ENCODE measurements at regions of chr14 and their contacts with region 1.

Region 1: GRCh38 chr14:37594238-37594914 is 673 bp downstream of the FOXA1 start:
- DNase-seq: no peak
- ATAC-seq: peak in 1 of 4 donors; percentile 6
- H3K4me3 ChIP-seq: peak overlapping the region; percentile 62
- H3K27ac ChIP-seq: no peak overlapping the region
- H3K4me1 ChIP-seq: peaks cover 29% of the 10 kb centered on the region
- H3K27me3 ChIP-seq: peaks cover 5 to 98% (median 56%) of the 10 kb centered on the region in 3 donors
- CTCF ChIP-seq: peak; percentile 49

Region 2: DNA sequence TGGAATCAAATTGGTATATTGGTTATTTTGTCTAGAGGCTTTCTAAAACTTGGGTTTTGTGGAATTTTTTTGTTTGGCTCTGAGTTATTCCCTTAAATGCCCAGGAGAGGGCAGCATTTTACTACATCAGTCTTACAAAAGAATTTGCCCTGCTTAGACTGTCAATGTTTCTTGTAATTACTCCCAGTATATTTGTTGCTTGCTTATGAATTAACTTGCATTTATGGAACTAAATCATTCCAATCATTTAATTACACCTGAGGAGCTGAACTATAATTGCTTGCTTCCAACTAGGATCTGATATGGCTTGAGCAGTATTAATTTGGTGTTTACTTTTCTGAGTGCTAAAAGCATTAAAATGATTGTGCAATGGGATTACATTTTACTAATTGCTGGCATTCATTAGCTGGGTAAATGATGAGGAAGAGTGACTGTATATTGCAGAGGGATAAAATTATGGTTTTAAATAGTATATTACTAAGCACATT is 347.9 kb before region 1 on chr14:
- intact Hi-C with region 1: loop called in 1 of 2 experiments (anchors 10 kb)
- DNase-seq: no peak
- ATAC-seq: peak in 1 of 4 donors; percentile 60
- H3K4me3 ChIP-seq: no peak overlapping the region
- H3K27ac ChIP-seq: no peak overlapping the region
- H3K4me1 ChIP-seq: no peaks in the 10 kb centered on the region
- H3K27me3 ChIP-seq: no peaks in the 10 kb centered on the region
- CTCF ChIP-seq: peak; percentile 73

Region 3: GRCh38 chr14:37550511-37550910 is 43.9 kb before region 1 on chr14:
- intact Hi-C with region 1: no loop called
- DNase-seq: no peak
- ATAC-seq: no peak
- H3K4me3 ChIP-seq: no peak overlapping the region
- H3K27ac ChIP-seq: no peak overlapping the region
- H3K4me1 ChIP-seq: no peaks in the 10 kb centered on the region
- H3K27me3 ChIP-seq: no peaks in the 10 kb centered on the region
- CTCF ChIP-seq: no peak